Heart right ventricle (tissue), 16 donors: ENCODE measurements at regions of chr17 and their contacts with region 1.

Region 1: GRCh38 chr17:12667299-12667958 is 1.7 kb downstream of the MYOCD start:
- DNase-seq: peak in 1 of 2 donors; percentile 54
- ATAC-seq: peak; percentile 65 to 84 (median 74)
- H3K4me3 ChIP-seq: peak overlapping the region; percentile 35 to 79 (median 67)
- H3K27ac ChIP-seq: peak overlapping the region; percentile 70 to 87 (median 78)
- H3K4me1 ChIP-seq: peaks cover 0 to 32% (median 12%) of the 10 kb centered on the region in 9 donors
- H3K27me3 ChIP-seq: peaks cover 0 to 45% (median 19%) of the 10 kb centered on the region in 7 donors
- CTCF ChIP-seq: peak in 8 of 9 donors; percentile 12 to 68 (median 51)

Region 2: GRCh38 chr17:12078791-12079190 is 588.6 kb before region 1 on chr17:
- intact Hi-C with region 1: no loop called
- DNase-seq: no peak
- ATAC-seq: no peak
- H3K4me3 ChIP-seq: no peak overlapping the region
- H3K27ac ChIP-seq: no peak overlapping the region
- H3K4me1 ChIP-seq: peaks cover 0 to 16% (median 10%) of the 10 kb centered on the region in 9 donors
- H3K27me3 ChIP-seq: no peaks in the 10 kb centered on the region
- CTCF ChIP-seq: no peak

Region 3: GRCh38 chr17:12187658-12188057 is 479.8 kb before region 1 on chr17:
- intact Hi-C with region 1: loop called in 5 of 10 experiments (anchors 5 kb)
- DNase-seq: no peak
- ATAC-seq: no peak
- H3K4me3 ChIP-seq: no peak overlapping the region
- H3K27ac ChIP-seq: no peak overlapping the region
- H3K4me1 ChIP-seq: no peaks in the 10 kb centered on the region
- H3K27me3 ChIP-seq: no peaks in the 10 kb centered on the region
- CTCF ChIP-seq: no peak

Region 4: DNA sequence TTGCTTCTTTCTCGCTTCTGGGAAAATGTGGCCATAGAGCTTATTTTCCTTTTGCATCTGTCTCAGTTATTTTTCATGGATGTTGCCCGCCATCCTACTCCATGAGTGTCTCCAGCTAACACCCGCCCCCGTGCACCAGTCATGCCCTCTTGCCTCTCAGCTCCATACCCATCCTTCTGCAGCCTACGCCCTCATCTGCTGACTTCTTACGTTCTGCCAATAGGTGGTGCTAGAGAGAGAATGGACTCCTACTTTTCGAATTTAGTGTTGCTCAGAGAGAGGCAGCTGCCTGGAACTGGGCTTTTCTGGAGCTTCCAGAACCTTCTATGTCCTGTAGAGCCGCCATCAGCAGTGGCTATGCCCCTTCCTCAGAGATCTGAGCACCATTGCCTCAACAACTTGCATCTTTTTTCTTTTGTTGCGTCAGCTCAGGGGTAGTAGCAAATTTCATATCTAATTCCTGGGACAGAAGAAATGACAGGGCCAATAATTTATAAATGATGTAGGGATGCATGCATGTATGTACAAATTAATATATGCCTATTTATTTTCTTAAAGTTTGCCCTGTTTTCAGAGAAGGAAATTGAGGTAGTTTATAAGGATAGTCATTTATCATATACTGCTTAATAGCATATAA is 121.4 kb before region 1 on chr17:
- intact Hi-C with region 1: loop called in 9 of 10 experiments (anchors 1 to 5 kb)
- DNase-seq: peak in 1 of 2 donors; percentile 31
- ATAC-seq: peak; percentile 73 to 90 (median 84)
- H3K4me3 ChIP-seq: no peak overlapping the region
- H3K27ac ChIP-seq: no peak overlapping the region
- H3K4me1 ChIP-seq: peaks cover 0 to 11% (median 0%) of the 10 kb centered on the region in 9 donors
- H3K27me3 ChIP-seq: no peaks in the 10 kb centered on the region
- CTCF ChIP-seq: peak; percentile 45 to 78 (median 72)

Region 5: GRCh38 chr17:12737743-12738469 is 70.5 kb after region 1 on chr17:
- intact Hi-C with region 1: loop called in 6 of 10 experiments (anchors 2 to 5 kb)
- DNase-seq: no peak
- ATAC-seq: no peak
- H3K4me3 ChIP-seq: no peak overlapping the region
- H3K27ac ChIP-seq: peak overlapping the region in 3 of 10 donors; percentile 80 to 87 (median 86)
- H3K4me1 ChIP-seq: peaks cover 0 to 38% (median 19%) of the 10 kb centered on the region in 9 donors
- H3K27me3 ChIP-seq: no peaks in the 10 kb centered on the region
- CTCF ChIP-seq: no peak